ENCODE measurements at regions of chr15 and their contacts with region 1.

Region 1: GRCh38 chr15:68948951-68949526 is 18.7 kb downstream of the SPESP1 start:
- DNase-seq: no peak
- H3K4me3 Mint-ChIP-seq: no peak overlapping the region
- H3K27ac Mint-ChIP-seq: no peak overlapping the region
- H3K4me1 Mint-ChIP-seq: no peaks in the 10 kb centered on the region
- H3K27me3 Mint-ChIP-seq: no peaks in the 10 kb centered on the region
- CTCF ChIP-seq: no peak

Region 2: GRCh38 chr15:68962465-68962864 is 13.4 kb after region 1 on chr15:
- CTCF ChIA-PET with region 1: no interaction called
- POLR2A ChIA-PET with region 1: no interaction called
- intact Hi-C with region 1: no loop called
- DNase-seq: no peak
- H3K4me3 Mint-ChIP-seq: no peak overlapping the region
- H3K27ac Mint-ChIP-seq: no peak overlapping the region
- H3K4me1 Mint-ChIP-seq: no peaks in the 10 kb centered on the region
- H3K27me3 Mint-ChIP-seq: no peaks in the 10 kb centered on the region
- CTCF ChIP-seq: no peak

Region 3: DNA sequence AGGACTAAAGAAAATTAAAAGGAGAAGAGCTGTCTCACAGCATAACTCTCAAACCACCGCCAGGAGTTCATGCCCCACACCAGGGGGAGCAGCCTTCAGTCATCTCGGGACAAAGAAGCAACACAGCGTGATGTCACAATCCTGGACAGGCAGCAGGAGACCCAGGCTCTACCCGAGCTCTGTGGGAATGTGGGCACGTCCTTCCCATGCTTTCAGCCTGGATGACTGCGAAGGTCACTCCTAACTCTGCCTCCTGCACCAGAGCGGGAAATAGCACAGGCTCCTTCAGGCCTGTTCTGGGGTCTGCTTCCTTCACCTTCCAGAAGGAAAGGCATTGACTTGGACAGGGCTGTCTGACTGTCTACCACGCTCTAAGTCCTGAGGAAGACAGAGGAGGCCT is 96.8 kb after region 1 on chr15:
- CTCF ChIA-PET with region 1: no interaction called
- POLR2A ChIA-PET with region 1: no interaction called
- intact Hi-C with region 1: loop called (anchors 10 kb)
- DNase-seq: peak; percentile 92
- H3K4me3 Mint-ChIP-seq: peak overlapping the region; percentile 66
- H3K27ac Mint-ChIP-seq: peak overlapping the region; percentile 93
- H3K4me1 Mint-ChIP-seq: peaks cover 32% of the 10 kb centered on the region
- H3K27me3 Mint-ChIP-seq: no peaks in the 10 kb centered on the region
- CTCF ChIP-seq: peak; percentile 26

Measured in MCF 10A (cell line).